ENCODE measurements at regions of chr20 and their contacts with region 1.

Region 1: GRCh38 chr20:50509935-50510705 is at the start of gene PTPN1:
- DNase-seq: peak; percentile 98 to 99 (median 98)
- ATAC-seq: peak; percentile 94
- H3K4me3 ChIP-seq: peak within 1 kb of the TSS; percentile 64
- H3K27ac ChIP-seq: peak within 1 kb of the TSS; percentile 85
- H3K4me1 ChIP-seq: peaks cover 15 to 18% of the 10 kb centered on the region in 2 experiments; a peak in 4 of 5 replicates
- H3K27me3 ChIP-seq: no peaks in the 10 kb centered on the region
- CTCF ChIP-seq: no peak
- EP300 ChIP-seq: no peak; the same call in 1 of the 2 replicates
- POLR2A ChIP-seq: peak; percentile 96
- RAD21 ChIP-seq: no peak
- polyA plus RNA-seq, gene PTPN1: 11.0 to 15.7 TPM

Region 2: DNA sequence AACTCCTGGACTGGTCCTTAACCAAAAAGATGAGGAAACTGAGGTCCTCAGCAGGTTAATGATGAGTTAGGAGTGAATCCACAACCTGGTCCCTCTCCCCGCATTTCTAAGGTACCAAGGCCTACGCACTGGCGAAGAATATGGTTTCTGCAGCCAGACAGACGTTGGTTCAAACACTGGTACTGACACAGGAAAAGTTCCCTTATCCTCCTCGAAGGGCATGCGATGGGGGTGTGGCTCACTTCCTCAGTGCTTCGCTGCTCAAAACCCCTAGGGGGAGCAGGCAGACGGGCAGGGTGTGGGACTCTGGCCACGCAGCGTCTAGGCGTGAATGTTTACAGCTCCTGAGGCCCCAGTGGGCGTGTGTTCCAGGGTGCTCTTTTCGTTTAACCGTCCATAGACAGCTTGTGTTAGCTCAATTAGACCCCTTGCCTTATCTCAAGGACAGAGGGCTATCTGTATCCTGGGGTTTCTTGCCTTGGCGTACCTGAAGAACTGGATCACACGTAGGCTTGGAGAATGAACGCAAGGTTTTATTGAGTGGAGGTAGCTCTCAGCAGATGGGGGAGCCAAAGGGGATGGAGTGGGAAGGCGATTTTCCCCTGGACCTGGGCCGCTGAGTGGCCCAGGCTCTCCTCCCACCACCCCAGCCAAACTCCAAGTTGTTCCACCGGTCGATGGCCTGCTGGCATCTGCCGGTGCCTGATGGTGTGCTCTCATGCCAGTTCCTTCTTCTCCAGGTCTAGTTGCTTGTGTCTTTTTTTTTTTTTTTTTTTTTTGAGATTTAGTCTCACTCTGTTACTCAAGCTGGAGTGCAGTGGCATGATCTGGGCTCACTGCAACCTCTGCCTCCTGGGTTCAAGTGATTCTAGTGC is 31.7 kb before region 1 on chr20:
- CTCF ChIA-PET with region 1: no interaction called
- POLR2A ChIA-PET with region 1: interaction called, 7 read pairs
- in situ Hi-C with region 1: no loop called
- intact Hi-C with region 1: loop called (anchors 5 kb)
- DNase-seq: peak; percentile 68 to 93 (median 74)
- ATAC-seq: peak; percentile 94
- H3K4me3 ChIP-seq: no peak overlapping the region
- H3K27ac ChIP-seq: peak overlapping the region; percentile 64
- H3K4me1 ChIP-seq: peaks cover 21 to 52% of the 10 kb centered on the region in 2 experiments
- H3K27me3 ChIP-seq: no peaks in the 10 kb centered on the region
- CTCF ChIP-seq: peak; percentile 89 to 92 (median 92)
- EP300 ChIP-seq: 0 out of 2 replicates have a peak, but pooled peaks have one; percentile 31
- POLR2A ChIP-seq: no peak
- RAD21 ChIP-seq: peak; percentile 74 to 89

Region 3: DNA sequence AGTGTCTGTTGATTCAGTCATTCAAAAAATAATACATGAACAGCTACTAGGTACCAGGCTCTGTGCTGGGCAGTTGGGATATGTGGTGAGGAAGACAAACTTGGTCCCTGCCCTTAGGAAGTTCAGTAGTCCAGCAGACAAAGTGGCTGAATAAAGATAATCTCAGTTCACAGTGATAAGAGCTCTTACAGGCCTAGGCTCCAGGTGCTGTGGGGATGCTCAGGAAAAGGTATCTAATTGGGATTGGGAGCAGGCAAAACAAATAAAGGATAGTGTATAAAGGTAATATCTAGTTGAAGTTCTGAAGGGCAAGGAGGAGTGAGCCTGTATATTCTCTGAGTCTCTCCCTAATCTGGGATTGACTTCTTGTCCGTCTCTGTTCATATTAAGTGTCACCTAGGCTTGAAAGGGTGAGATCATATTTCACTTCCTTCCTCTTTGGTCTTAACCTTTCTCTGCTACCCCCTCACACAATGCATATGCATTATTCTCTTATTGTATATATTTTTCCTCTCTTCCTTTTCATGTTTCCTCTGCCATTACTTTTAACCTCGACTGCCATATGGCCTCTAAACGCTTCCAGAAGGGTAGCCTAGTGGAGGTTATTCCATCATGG is 13.5 kb after region 1 on chr20:
- CTCF ChIA-PET with region 1: no interaction called
- POLR2A ChIA-PET with region 1: interaction called, 63 read pairs
- in situ Hi-C with region 1: no loop called
- intact Hi-C with region 1: no loop called
- DNase-seq: no peak
- ATAC-seq: peak; percentile 41
- H3K4me3 ChIP-seq: no peak overlapping the region
- H3K27ac ChIP-seq: peak overlapping the region; percentile 56; the same call in 2 of the 3 replicates
- H3K4me1 ChIP-seq: peaks cover 42 to 65% of the 10 kb centered on the region in 2 experiments
- H3K27me3 ChIP-seq: no peaks in the 10 kb centered on the region
- CTCF ChIP-seq: no peak
- EP300 ChIP-seq: no peak
- POLR2A ChIP-seq: no peak
- RAD21 ChIP-seq: peak in 1 of 2 experiments; percentile 4; a peak in 1 of 4 replicates

Region 4: GRCh38 chr20:50528804-50529351 is 18.8 kb after region 1 on chr20:
- CTCF ChIA-PET with region 1: no interaction called
- POLR2A ChIA-PET with region 1: interaction called, 63 read pairs
- in situ Hi-C with region 1: no loop called
- intact Hi-C with region 1: no loop called
- DNase-seq: no peak
- ATAC-seq: no peak
- H3K4me3 ChIP-seq: no peak overlapping the region
- H3K27ac ChIP-seq: no peak overlapping the region
- H3K4me1 ChIP-seq: peaks cover 17 to 19% of the 10 kb centered on the region in 2 experiments
- H3K27me3 ChIP-seq: no peaks in the 10 kb centered on the region
- CTCF ChIP-seq: no peak
- EP300 ChIP-seq: no peak
- POLR2A ChIP-seq: no peak
- RAD21 ChIP-seq: no peak

Region 5: GRCh38 chr20:50540620-50541605 is 30.8 kb after region 1 on chr20:
- CTCF ChIA-PET with region 1: no interaction called
- POLR2A ChIA-PET with region 1: interaction called, 10 read pairs
- in situ Hi-C with region 1: no loop called
- intact Hi-C with region 1: no loop called
- DNase-seq: no peak
- ATAC-seq: peak; percentile 50
- H3K4me3 ChIP-seq: no peak overlapping the region
- H3K27ac ChIP-seq: peak overlapping the region; percentile 71; the same call in 2 of the 3 replicates
- H3K4me1 ChIP-seq: peaks cover 5 to 23% of the 10 kb centered on the region in 2 experiments; a peak in 4 of 5 replicates
- H3K27me3 ChIP-seq: no peaks in the 10 kb centered on the region
- CTCF ChIP-seq: no peak; a peak in 1 of 6 replicates
- EP300 ChIP-seq: no peak
- POLR2A ChIP-seq: no peak
- RAD21 ChIP-seq: no peak

Region 6: DNA sequence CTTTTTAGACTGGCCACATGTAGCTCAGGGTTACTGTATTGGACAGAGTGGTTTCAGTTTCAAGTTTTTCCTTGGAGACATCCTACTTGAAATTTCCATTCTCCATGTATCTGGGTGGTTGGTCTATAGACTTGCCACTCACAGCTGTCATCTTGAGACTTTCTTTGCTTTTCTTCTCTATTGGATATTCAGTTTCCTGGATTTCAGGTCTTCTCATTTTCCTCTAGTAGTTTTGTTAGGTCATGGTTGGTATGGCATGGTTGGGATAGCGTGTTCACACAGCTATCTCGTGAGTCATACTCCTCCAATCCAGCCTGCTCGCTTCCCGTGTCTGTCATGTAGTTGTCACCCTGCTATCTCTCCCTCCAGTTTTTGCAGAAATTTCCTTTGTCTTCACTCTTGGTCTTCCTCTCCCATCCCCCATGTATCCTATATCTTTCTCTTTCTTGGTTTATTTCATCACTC is 48.4 kb after region 1 on chr20:
- CTCF ChIA-PET with region 1: no interaction called
- POLR2A ChIA-PET with region 1: no interaction called
- in situ Hi-C with region 1: no loop called
- intact Hi-C with region 1: loop called (anchors 2 kb)
- DNase-seq: peak; percentile 63 to 89 (median 76)
- ATAC-seq: peak; percentile 95
- H3K4me3 ChIP-seq: no peak overlapping the region
- H3K27ac ChIP-seq: peak overlapping the region; percentile 85
- H3K4me1 ChIP-seq: peaks cover 4 to 7% of the 10 kb centered on the region in 2 experiments; a peak in 4 of 5 replicates
- H3K27me3 ChIP-seq: no peaks in the 10 kb centered on the region
- CTCF ChIP-seq: no peak
- EP300 ChIP-seq: peak; percentile 57; the same call in 1 of the 2 replicates
- POLR2A ChIP-seq: no peak
- RAD21 ChIP-seq: no peak

Region 7: DNA sequence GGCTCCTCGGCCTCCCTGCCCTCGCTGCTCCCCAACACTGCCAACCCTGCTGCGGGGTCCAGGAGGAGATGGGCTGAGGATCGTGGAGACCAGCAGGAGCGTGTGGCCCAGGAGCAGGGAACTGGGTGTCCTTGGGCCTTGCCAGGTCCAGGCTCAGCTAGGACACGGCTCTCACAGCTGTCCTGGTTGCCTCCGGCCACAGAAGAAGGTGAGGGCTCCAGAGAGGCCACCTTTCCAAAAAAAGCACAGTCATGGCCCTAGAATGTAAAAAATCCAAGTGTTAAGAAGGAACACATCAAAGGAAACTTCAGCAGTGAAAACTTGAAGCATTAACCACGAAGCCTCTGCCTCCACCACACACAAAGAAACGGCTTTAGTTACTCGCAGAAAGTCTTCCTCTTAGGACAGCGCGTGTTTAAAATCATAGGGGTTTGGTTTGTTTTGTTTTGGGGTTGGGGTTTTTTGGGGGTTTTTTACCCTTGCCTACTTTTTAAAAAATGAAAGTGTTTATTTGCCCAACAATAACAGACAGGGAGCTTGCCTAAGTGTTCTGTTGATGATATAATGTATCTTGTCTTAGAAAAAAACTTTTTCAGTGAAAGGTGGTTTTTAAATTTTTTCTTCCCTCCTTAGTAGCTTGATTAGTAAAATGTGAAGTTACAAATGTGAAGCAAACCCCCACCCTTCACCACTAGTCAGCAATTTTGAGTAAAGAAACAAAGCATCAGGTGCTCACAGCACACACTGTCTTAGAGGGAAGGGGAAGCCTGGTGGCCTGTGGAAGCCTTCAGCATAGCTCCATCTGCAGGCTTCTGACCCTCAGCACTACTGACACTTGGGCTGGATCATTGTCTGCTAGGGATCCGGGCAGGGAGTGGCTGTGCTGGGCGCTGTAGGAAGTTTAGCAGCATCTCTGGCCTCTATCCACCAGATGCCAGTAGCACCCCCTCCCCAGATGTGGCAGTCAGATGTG is 60.0 kb after region 1 on chr20:
- CTCF ChIA-PET with region 1: no interaction called
- POLR2A ChIA-PET with region 1: interaction called, 4 read pairs
- in situ Hi-C with region 1: no loop called
- intact Hi-C with region 1: loop called (anchors 2 kb)
- DNase-seq: peak; percentile 35 to 75 (median 54)
- ATAC-seq: peak; percentile 99
- H3K4me3 ChIP-seq: no peak overlapping the region
- H3K27ac ChIP-seq: peak overlapping the region; percentile 59; the same call in 2 of the 3 replicates
- H3K4me1 ChIP-seq: peaks cover 4 to 22% of the 10 kb centered on the region in 2 experiments
- H3K27me3 ChIP-seq: no peaks in the 10 kb centered on the region
- CTCF ChIP-seq: peak; percentile 79 to 88 (median 83)
- EP300 ChIP-seq: peak; percentile 31; the same call in 1 of the 2 replicates
- POLR2A ChIP-seq: no peak
- RAD21 ChIP-seq: peak; percentile 74 to 91